ENCODE measurements at regions of chr4 and their contacts with region 1.

Region 1: GRCh38 chr4:119628308-119629141 is at the start of gene PDE5A:
- DNase-seq: peak; percentile 79
- H3K4me3 Mint-ChIP-seq: peak within 1 kb of the TSS; percentile 79
- H3K27ac Mint-ChIP-seq: no peak within 1 kb of the TSS
- H3K4me1 Mint-ChIP-seq: peaks cover 24% of the 10 kb centered on the region
- H3K27me3 Mint-ChIP-seq: peaks cover 31% of the 10 kb centered on the region
- total RNA-seq, gene PDE5A: 0.81 to 1.1 TPM

Region 2: DNA sequence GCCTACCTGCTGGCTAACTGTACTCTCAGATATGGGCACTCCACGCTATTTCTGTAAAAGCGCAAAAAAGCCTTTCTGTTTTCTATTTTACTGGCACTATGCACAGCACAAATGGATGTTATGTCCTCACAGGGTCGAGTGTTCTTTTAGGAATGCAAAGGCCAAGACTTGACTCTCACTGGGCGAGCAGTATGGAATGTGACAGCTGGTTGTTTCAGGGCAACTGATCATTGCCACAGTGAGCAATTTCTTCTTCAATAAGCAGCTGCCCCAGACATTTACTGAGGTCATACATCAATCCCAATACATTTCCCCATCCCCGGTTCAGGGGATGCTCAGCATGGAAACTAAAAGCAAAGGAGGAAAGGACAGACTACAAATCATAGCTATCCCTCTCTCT is 58.1 kb before region 1 on chr4:
- CTCF ChIA-PET with region 1: no interaction called
- POLR2A ChIA-PET with region 1: no interaction called
- DNase-seq: no peak
- H3K4me3 Mint-ChIP-seq: no peak overlapping the region
- H3K27ac Mint-ChIP-seq: no peak overlapping the region
- H3K4me1 Mint-ChIP-seq: no peaks in the 10 kb centered on the region
- H3K27me3 Mint-ChIP-seq: no peaks in the 10 kb centered on the region

Region 3: DNA sequence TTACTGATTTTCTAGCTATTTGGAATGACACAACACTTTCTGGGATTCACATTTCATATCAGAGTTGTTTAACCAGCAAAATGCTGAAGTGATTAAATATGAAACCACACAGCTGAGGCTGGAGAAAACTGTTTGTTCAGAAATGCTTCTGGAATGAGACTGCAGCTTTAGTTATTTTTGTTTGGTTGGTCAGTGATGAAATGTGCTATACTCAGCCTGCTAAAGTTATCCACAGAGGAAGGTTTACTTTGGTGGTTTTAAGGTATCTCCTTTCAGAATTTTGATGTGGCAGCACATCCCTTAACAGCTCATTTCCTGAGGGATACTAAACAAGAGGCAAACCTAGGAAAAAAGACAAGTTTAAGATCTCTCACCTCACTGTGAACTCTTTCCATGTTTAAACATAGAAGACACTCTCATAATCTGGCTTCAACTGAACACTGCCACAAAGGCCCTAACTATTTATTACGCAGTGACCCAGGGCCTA is 106.7 kb after region 1 on chr4:
- CTCF ChIA-PET with region 1: no interaction called
- POLR2A ChIA-PET with region 1: no interaction called
- DNase-seq: no peak
- H3K4me3 Mint-ChIP-seq: no peak overlapping the region
- H3K27ac Mint-ChIP-seq: no peak overlapping the region
- H3K4me1 Mint-ChIP-seq: no peaks in the 10 kb centered on the region
- H3K27me3 Mint-ChIP-seq: no peaks in the 10 kb centered on the region

Region 4: GRCh38 chr4:120049732-120050494 is 421.4 kb after region 1 on chr4:
- CTCF ChIA-PET with region 1: interaction called, 22 read pairs
- POLR2A ChIA-PET with region 1: no interaction called
- DNase-seq: peak; percentile 71
- H3K4me3 Mint-ChIP-seq: no peak overlapping the region
- H3K27ac Mint-ChIP-seq: no peak overlapping the region
- H3K4me1 Mint-ChIP-seq: peaks cover 5% of the 10 kb centered on the region
- H3K27me3 Mint-ChIP-seq: no peaks in the 10 kb centered on the region

Region 5: GRCh38 chr4:120056246-120056645 is 427.7 kb after region 1 on chr4:
- CTCF ChIA-PET with region 1: interaction called, 22 read pairs
- POLR2A ChIA-PET with region 1: no interaction called
- DNase-seq: no peak
- H3K4me3 Mint-ChIP-seq: no peak overlapping the region
- H3K27ac Mint-ChIP-seq: no peak overlapping the region
- H3K4me1 Mint-ChIP-seq: peaks cover 13% of the 10 kb centered on the region
- H3K27me3 Mint-ChIP-seq: no peaks in the 10 kb centered on the region